Right ventricle myocardium inferior (tissue), 1 donor: ENCODE measurements at regions of chr18 and their contacts with region 1.

Region 1: DNA sequence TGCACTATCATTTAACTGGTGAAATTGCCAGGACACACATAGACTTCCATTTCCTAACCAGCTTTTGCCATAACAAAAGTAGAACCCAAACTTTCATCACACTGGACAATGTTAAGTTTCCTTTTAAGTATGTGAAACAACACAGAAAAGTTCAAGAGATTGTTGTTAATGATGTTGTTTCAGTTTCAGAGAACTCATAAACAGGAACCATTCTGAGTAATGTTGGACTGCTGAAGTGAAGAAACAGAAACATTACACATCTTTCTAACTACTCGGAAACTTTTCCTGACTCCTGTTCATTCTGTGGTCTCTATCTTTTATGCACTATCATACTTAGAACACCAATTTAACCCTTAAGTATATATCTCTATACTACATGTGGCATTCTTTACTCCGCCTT is 179.2 kb downstream of the RIT2 start:
- DNase-seq: no peak
- ATAC-seq: no peak

Region 2: GRCh38 chr18:42141439-42141838 is 794.9 kb before region 1 on chr18:
- intact Hi-C with region 1: loop called (anchors 5 kb)
- DNase-seq: no peak
- ATAC-seq: no peak

Region 3: GRCh38 chr18:42564761-42565160 is 371.5 kb before region 1 on chr18:
- intact Hi-C with region 1: no loop called
- DNase-seq: no peak
- ATAC-seq: no peak